ENCODE measurements at regions of chr14 and their contacts with region 1.

Region 1: DNA sequence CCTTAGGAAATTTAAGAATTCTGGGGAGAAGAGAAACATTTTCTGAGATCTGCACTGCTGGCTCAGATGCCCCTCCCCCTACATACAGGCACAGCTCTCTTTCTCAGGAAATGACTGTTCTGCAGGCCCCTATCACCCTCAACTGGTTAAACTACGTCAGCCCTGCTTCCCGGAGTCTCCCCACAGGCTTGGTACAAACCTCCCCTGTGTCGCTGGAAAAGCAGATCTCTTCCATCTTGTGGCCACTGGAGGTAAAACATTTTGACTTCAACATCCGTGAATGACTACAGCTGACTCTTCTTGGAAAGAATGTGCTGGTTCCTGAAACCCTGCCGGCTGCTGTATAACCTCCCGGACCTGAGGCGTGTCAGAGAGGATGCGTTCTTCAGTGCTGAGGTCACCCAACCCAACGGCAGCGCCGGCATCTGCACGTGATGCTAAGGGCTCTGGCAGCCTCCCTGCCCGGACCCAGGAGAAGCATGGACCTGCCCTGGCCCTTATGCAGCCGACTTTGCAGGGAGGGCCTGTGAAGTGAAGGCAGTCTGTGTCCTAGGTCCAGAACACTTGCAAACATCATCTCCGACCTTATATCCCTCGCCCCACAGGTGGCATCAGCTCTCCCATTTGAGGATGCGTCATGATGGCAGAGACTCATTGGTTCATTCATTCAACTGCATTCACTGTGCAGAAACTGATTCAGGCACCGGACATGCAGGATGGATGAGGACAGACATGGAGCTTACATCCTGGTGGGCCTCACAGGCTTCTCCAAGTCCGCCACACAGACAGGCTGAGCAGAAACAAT is 129.3 kb downstream of the GCH1 start:
- DNase-seq: peak; percentile 64 to 93
- ATAC-seq: peak; percentile 77 to 91 (median 84)
- H3K4me3 ChIP-seq: peak overlapping the region in 3 of 10 donors; percentile 1 to 12 (median 1)
- H3K27ac ChIP-seq: peak overlapping the region; percentile 45 to 96 (median 91)
- H3K4me1 ChIP-seq: peaks cover 15 to 96% (median 64%) of the 10 kb centered on the region in 9 donors
- H3K27me3 ChIP-seq: no peaks in the 10 kb centered on the region
- CTCF ChIP-seq: peak; percentile 35 to 78 (median 62)

Region 2: DNA sequence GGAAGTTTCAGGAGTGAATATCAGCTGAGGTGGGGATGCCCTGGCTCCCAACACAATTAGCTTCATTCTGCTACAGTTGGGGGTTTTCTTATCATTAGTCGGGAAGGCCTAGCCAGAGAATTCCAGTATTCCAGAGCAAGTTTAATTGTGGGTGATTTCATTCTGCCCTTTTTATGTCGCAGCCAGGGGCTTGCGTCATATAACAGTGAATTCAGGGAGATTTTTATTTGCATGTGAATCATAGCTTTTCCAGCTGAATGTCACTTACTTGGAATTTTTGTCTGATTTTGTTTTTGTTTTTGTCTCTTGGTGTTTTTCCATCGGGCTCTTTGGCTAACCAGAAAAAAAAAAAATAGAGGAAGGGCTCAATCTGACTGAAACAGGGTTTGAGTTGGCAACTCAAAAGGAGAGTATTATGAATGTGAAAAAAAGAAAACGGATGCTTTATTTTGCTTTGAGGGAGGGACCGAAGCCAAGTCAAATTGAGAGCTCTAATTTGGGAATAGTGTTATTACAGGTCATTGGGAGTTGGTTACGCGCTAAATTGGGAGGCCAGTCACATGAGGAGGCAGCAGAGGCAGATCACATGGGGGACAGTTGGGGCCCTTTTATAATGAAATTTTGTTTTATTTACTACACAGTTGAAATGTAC is 87.0 kb before region 1 on chr14:
- intact Hi-C with region 1: loop called in 9 of 10 experiments (anchors 5 to 10 kb)
- DNase-seq: peak in 1 of 2 donors; percentile 82
- ATAC-seq: peak; percentile 56 to 84 (median 76)
- H3K4me3 ChIP-seq: peak overlapping the region in 5 of 10 donors; percentile 0 to 23 (median 16)
- H3K27ac ChIP-seq: peak overlapping the region; percentile 63 to 96 (median 88)
- H3K4me1 ChIP-seq: peaks cover 18 to 94% (median 78%) of the 10 kb centered on the region in 9 donors
- H3K27me3 ChIP-seq: no peaks in the 10 kb centered on the region
- CTCF ChIP-seq: no peak

Region 3: DNA sequence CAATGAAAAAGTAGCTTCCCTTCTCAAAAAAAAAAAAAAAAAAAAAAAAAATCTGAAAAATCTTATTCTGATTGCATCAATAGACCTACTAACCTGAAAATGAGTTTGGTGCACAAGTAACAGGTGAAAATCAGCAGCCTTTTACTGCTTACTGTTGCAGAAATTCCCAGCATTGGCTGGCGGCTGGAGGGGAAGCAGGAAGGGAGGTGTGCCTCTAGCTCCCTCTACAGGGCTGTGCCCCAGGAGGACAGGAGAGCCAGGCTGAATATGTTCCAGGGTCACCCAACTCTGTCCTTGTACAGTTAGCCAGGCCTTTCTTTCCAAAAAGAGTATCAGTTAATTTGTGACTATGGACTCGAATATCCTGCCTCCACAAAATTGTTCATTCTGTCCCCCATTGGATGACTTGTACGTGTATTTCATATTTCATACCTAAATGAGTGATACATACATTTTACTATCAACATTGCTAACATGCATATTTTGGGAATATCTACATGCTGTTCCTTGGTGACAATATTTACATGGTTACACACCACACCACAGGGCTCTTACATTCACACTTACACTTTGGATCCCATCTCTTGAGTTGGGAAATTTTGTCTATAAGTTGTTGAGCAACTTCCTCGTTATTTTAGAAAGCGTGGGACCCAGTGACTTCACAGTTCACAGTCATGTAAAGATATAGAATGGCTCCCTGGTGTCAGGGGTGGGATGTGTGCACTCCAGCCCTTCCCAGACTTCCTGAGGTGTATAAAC is 81.7 kb before region 1 on chr14:
- intact Hi-C with region 1: loop called in 9 of 10 experiments (anchors 5 to 10 kb)
- DNase-seq: peak; percentile 70 to 85
- ATAC-seq: peak; percentile 71 to 88 (median 82)
- H3K4me3 ChIP-seq: no peak overlapping the region
- H3K27ac ChIP-seq: peak overlapping the region in 9 of 10 donors; percentile 14 to 96 (median 75)
- H3K4me1 ChIP-seq: peaks cover 11 to 86% (median 52%) of the 10 kb centered on the region in 9 donors
- H3K27me3 ChIP-seq: no peaks in the 10 kb centered on the region
- CTCF ChIP-seq: peak; percentile 83 to 95 (median 91)

Region 4: GRCh38 chr14:54722781-54723432 is 50.5 kb before region 1 on chr14:
- intact Hi-C with region 1: loop called in 2 of 10 experiments (anchors 5 kb)
- DNase-seq: no peak
- ATAC-seq: peak in 6 of 8 donors; percentile 57 to 84 (median 74)
- H3K4me3 ChIP-seq: no peak overlapping the region
- H3K27ac ChIP-seq: no peak overlapping the region
- H3K4me1 ChIP-seq: peaks cover 0 to 51% (median 34%) of the 10 kb centered on the region in 9 donors
- H3K27me3 ChIP-seq: no peaks in the 10 kb centered on the region
- CTCF ChIP-seq: peak in 8 of 9 donors; percentile 21 to 73 (median 55)

Region 5: GRCh38 chr14:54730156-54730961 is 43.0 kb before region 1 on chr14:
- intact Hi-C with region 1: loop called in 1 of 10 experiments (anchors 5 kb)
- DNase-seq: no peak
- ATAC-seq: peak; percentile 40 to 76 (median 66)
- H3K4me3 ChIP-seq: peak overlapping the region in 6 of 10 donors; percentile 3 to 30 (median 13)
- H3K27ac ChIP-seq: peak overlapping the region in 9 of 10 donors; percentile 9 to 76 (median 59)
- H3K4me1 ChIP-seq: peaks cover 0 to 52% (median 31%) of the 10 kb centered on the region in 9 donors
- H3K27me3 ChIP-seq: no peaks in the 10 kb centered on the region
- CTCF ChIP-seq: no peak

Region 6: DNA sequence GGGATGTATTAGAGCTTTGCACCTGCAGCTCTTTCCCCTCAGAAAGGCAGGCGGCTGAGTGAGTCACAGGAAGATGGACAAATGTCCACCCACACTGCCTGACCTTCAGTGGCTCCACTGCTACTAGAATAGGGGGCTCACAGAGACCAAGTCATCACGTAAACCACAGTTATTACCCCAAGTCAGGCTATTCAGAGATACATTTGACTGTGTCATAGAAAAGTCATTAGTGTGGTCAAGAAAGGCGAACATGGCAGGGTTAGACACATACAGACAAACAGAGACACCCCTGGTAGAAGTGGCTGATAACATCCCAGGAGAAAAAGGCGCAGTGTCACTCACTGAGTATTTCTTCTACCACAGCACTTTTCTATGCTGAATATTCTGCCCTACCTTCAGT is 93.2 kb after region 1 on chr14:
- intact Hi-C with region 1: no loop called
- DNase-seq: no peak
- ATAC-seq: no peak
- H3K4me3 ChIP-seq: no peak overlapping the region
- H3K27ac ChIP-seq: no peak overlapping the region
- H3K4me1 ChIP-seq: peaks cover 0 to 43% (median 18%) of the 10 kb centered on the region in 9 donors
- H3K27me3 ChIP-seq: no peaks in the 10 kb centered on the region
- CTCF ChIP-seq: no peak

Measured in heart right ventricle (tissue), 16 donors.